ENCODE measurements at regions of chr1 and their contacts with region 1.

Region 1: DNA sequence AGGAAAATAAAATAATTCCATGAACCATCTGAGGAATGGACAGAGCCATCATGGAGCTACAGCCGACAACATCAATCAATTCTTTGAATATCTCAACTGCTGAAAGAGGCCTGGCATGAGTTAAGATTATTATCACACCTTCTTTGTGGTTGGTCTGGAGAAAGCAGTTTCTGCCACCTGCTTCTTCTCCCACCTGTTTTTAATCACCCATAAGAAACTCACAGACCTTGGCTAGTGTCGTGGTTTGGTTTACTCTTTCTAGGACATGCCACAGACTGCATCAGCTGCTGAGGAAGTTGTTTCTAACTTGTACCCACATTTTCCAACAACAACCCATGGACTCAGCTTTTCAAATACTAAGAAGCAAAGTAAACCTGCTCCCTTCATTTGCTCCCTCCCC is 65.6 kb downstream of the NTPCR start:
- DNase-seq: no peak
- ATAC-seq: no peak

Region 2: DNA sequence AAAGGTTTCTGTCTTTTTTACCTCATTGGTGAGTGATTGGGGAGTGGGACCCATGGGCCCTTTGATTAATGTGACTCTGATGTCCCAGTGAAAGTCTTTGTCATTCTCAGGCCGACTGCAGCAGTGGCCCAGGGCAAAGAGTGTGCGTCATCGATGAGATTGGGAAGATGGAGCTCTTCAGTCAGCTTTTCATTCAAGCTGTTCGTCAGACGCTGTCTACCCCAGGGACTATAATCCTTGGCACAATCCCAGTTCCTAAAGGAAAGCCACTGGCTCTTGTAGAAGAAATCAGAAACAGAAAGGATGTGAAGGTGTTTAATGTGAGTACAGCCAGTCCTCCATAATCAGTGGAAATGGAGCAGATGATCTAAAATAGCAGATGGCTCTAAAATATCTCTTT is 46.2 kb before region 1 on chr1:
- intact Hi-C with region 1: loop called (anchors 2 kb)
- DNase-seq: no peak
- ATAC-seq: peak; percentile 9

Region 3: GRCh38 chr1:233113009-233113879 is 97.3 kb after region 1 on chr1:
- intact Hi-C with region 1: no loop called
- DNase-seq: peak; percentile 74
- ATAC-seq: peak; percentile 96

Measured in left ventricle myocardium superior (tissue), 1 donor.